OCI-LY7 (cell line): ENCODE measurements at regions of chr17 and their contacts with region 1.

Region 1: GRCh38 chr17:74776044-74776977 is at the start of gene NAT9:
- DNase-seq: peak; percentile 100
- H3K4me3 ChIP-seq: peak within 1 kb of the TSS; percentile 75
- H3K27ac ChIP-seq: peak within 1 kb of the TSS; percentile 32
- H3K4me1 ChIP-seq: peaks cover 26% of the 10 kb centered on the region
- CTCF ChIP-seq: no peak
- total RNA-seq, gene NAT9: 77.2 and 99.3 TPM in 2 replicates

Region 2: GRCh38 chr17:74659898-74660297 is 116.4 kb before region 1 on chr17:
- CTCF ChIA-PET with region 1: interaction called, 3 read pairs
- POLR2A ChIA-PET with region 1: interaction called, 3 read pairs
- intact Hi-C with region 1: loop called (anchors 1 kb)
- DNase-seq: no peak
- H3K4me3 ChIP-seq: no peak overlapping the region
- H3K27ac ChIP-seq: no peak overlapping the region
- H3K4me1 ChIP-seq: no peaks in the 10 kb centered on the region
- CTCF ChIP-seq: no peak

Region 3: DNA sequence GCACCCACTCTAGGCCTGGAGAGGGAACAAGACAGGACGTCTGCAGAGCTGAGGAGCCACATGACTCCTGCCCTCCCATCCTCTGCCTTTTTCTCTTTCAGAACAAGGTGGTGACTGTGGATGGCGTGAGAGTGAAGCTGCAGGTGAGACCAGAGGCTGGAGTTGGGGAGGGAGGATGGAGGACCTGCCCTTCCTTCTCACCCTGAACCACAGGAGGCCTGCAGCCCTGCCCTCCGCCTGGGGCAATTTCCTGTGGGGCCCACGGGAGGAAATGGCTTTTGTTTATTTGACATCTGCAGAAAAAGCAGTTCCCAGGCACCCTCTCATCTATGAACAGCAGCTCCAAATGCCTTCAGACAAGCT is 34.2 kb before region 1 on chr17:
- CTCF ChIA-PET with region 1: interaction called, 10 read pairs
- POLR2A ChIA-PET with region 1: interaction called, 19 read pairs
- intact Hi-C with region 1: loop called (anchors 1 kb)
- DNase-seq: peak; percentile 93
- H3K4me3 ChIP-seq: peak overlapping the region; percentile 12
- H3K27ac ChIP-seq: peak overlapping the region; percentile 81
- H3K4me1 ChIP-seq: peaks cover 60% of the 10 kb centered on the region
- CTCF ChIP-seq: no peak

Region 4: DNA sequence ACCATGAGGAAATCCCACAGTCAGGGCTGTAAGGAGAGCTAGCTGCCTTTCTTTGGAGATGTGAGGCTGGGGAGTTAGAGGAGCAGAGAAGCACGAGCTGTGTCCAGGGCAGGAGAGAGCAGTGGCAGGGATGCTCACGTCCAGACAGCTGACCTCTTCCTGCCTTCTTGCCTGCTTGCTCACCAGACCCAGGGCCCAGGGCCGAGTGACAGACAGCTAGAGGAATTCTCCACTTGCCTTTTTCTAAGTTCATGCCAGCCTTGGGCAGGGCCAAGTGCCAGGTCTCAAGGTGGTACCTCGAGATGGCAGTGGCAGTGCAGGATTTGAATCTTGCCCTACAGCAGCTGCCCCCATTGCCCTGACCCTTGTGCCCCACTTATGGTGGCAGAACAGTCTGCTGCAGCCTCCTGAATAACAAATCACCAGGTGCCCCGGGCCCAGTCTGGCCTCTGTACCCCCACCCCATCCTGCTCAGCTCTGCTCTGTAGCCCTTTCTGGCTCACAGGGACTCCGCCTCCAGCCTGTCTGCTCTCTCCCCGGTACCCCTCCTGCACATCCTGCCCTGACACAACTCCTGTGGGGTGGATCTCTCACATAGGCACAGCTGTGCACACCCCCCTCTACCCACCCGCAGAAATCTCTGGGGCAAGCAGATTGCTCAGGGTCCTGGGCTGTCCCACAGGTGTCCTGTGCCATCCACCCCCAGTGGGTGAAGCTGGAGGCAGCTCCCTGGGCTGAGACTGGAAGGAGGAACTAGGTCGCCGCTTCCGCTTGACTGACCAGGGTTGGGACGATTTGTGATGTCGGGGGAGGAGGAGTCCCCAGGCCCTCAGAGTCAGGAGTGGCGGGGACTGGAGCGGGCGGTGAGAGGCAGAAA is 57.4 kb after region 1 on chr17:
- CTCF ChIA-PET with region 1: no interaction called
- POLR2A ChIA-PET with region 1: interaction called, 13 read pairs
- intact Hi-C with region 1: no loop called
- DNase-seq: peak; percentile 82
- H3K4me3 ChIP-seq: peak overlapping the region; percentile 35
- H3K27ac ChIP-seq: peak overlapping the region; percentile 60
- H3K4me1 ChIP-seq: peaks cover 40% of the 10 kb centered on the region
- CTCF ChIP-seq: no peak